ENCODE measurements at regions of chr15 and their contacts with region 1.

Region 1: DNA sequence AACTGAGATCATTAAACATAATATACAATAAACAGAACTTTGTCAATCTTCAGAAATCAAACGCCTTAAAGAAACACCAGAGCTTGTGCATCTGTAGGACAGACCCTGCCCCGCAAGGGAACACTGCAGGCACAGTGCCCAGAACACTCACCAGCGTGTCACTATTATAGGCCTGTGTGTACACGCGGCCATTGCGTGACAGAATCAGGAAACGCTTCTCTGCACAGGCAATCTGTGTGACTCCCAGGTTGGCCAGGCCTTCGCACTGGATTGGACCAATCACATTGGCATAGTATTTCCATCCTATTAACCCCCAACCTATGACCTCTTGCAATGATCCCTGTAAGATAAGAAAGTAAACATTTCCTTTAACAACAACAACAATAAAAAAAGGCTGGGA is 52.9 kb downstream of the HERC2 start:
- DNase-seq: no peak
- ATAC-seq: no peak
- H3K4me3 Mint-ChIP-seq: no peak overlapping the region
- H3K27ac Mint-ChIP-seq: no peak overlapping the region
- H3K4me1 Mint-ChIP-seq: peaks cover 16% of the 10 kb centered on the region
- H3K27me3 Mint-ChIP-seq: no peaks in the 10 kb centered on the region
- CTCF ChIP-seq: no peak

Region 2: DNA sequence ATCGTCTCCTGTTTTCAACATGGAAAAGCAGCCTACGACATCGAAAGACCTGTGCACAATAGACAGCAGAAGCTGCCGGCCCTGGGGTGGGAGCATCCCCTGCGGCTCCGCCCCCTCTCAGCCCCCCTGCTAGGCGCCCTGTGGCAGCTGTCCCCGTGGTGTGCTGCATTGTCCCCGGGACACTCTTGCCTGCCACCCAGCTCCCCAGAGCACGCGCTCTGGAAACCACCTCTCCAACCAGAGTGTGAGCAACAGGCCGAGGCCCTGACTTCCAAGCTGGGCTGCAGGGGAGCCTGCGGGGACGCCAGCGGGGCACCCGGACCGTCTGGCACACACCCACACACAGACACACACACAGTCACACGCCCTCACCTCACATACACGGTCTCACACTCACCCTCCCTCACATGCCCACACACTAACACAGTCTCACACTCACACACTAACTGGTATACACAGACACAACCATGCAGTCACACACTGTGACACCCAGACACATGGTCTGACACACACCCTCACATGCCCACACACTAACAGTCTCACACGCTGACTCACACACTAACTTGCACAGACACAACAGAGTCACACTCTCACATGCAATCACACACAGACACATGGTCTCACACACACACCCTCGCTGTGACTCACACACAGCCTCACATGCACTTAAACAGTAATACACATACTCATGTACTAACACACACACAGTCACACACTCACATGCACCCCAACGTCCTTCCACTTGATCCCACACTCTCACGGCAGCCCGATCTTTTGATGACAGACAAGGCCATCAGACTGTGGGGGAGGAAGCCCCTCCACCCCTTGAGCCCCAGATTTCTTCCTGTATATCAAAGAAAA is 264.7 kb before region 1 on chr15:
- CTCF ChIA-PET with region 1: no interaction called
- POLR2A ChIA-PET with region 1: no interaction called
- DNase-seq: no peak
- ATAC-seq: no peak
- H3K4me3 Mint-ChIP-seq: no peak overlapping the region
- H3K27ac Mint-ChIP-seq: peak overlapping the region; percentile 21; the same call in 1 of the 2 replicates
- H3K4me1 Mint-ChIP-seq: no peaks in the 10 kb centered on the region
- H3K27me3 Mint-ChIP-seq: no peaks in the 10 kb centered on the region
- CTCF ChIP-seq: no peak

Region 3: GRCh38 chr15:28289694-28290463 is 20.8 kb after region 1 on chr15:
- CTCF ChIA-PET with region 1: no interaction called
- POLR2A ChIA-PET with region 1: interaction called, 14 read pairs
- DNase-seq: no peak
- ATAC-seq: no peak
- H3K4me3 Mint-ChIP-seq: no peak overlapping the region
- H3K27ac Mint-ChIP-seq: no peak overlapping the region
- H3K4me1 Mint-ChIP-seq: peaks cover 32% of the 10 kb centered on the region
- H3K27me3 Mint-ChIP-seq: no peaks in the 10 kb centered on the region; the same call in 1 of the 2 replicates
- CTCF ChIP-seq: no peak